ENCODE measurements at regions of chr7 and their contacts with region 1.

Region 1: DNA sequence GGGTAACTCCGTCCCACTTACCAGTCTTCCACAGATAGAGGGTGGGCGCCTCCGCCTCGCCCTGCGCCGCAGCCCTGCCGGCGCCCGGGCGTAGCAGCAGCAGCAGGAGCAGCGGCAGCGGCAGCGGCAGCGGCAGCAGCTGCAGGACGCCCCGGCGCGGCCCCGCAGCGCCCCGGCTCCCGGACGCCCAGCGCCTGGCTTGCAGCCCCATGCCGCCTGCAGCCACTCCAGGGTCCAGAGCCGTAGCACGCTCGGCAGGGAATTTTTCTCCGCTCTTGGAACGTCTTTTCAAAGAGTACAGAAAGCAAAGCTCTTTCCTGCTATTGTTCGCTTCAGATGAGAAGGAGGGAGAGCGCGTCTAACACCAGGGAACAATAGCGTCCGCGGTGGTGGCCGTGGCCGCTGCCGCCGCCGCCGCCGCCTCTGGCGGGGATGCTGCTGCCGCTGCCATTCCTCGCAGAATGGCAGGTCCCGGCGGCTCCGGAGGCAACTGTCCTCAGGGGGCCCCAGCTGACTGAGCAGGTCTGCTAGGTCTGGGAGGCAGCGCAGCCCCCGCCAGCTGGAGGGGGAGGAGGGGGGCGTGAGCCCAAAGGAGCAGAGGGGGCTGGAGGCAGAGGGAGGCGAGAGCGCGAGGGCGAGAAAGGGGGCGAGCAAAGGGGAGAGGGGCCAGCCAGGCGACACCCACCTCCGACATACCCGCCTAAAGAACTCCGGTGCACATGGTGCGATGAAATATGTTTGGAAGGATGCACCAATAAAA is at the start of gene THSD7A:
- DNase-seq: peak; percentile 19 to 74 (median 32)
- ATAC-seq: peak; percentile 73 to 94 (median 86)
- H3K4me3 ChIP-seq: peak within 1 kb of the TSS; percentile 32 to 82 (median 58)
- H3K27ac ChIP-seq: peak within 1 kb of the TSS in 11 of 12 donors; percentile 34 to 77 (median 65)
- H3K4me1 ChIP-seq: peaks cover 0 to 19% (median 7%) of the 10 kb centered on the region in 12 donors
- H3K27me3 ChIP-seq: peaks cover 0 to 13% (median 0%) of the 10 kb centered on the region in 9 donors
- CTCF ChIP-seq: peak in 2 of 12 donors; percentile 18 to 28
- POLR2A ChIP-seq: no peak
- total RNA-seq, gene THSD7A: 0.67 to 5.2 (median 1.6) TPM

Region 2: GRCh38 chr7:11427686-11428273 is 404.1 kb before region 1 on chr7:
- intact Hi-C with region 1: loop called in 5 of 10 experiments (anchors 5 to 10 kb)
- DNase-seq: no peak
- ATAC-seq: no peak
- H3K4me3 ChIP-seq: no peak overlapping the region
- H3K27ac ChIP-seq: no peak overlapping the region
- H3K4me1 ChIP-seq: peaks cover 0 to 10% (median 0%) of the 10 kb centered on the region in 12 donors
- H3K27me3 ChIP-seq: no peaks in the 10 kb centered on the region
- CTCF ChIP-seq: peak; percentile 55 to 89 (median 74)
- POLR2A ChIP-seq: no peak

Region 3: DNA sequence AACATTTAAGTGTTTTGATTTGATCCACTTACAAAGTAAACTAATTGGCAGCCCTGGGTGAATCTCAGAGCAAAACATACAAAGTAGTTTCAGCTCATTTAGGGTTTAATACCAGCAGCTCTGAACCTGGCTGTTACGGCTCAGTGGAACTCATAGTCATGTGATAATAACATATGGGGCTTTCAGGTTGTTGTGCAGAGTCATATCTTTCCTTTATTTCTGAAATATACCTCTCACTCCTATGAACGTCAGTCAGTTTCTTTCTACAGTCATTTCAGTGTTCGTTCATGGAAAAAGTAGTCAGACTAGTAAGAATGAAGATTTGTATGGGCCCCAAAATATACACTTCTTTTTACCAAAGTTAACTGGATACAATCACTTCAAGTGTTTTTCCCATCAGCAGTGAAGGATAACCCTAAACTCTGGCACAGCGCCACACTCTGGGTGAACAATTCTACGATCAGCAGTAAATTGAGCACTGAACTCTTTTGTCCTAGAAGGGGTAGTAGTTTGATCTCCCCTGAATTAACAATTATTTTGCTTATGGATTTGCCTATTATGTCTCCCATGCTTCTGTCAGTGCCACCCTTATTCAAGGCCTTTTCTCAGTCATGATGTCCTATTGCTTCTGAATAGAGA is 218.5 kb before region 1 on chr7:
- intact Hi-C with region 1: loop called in 1 of 10 experiments (anchors 10 kb)
- DNase-seq: no peak
- ATAC-seq: no peak
- H3K4me3 ChIP-seq: no peak overlapping the region
- H3K27ac ChIP-seq: no peak overlapping the region
- H3K4me1 ChIP-seq: no peaks in the 10 kb centered on the region
- H3K27me3 ChIP-seq: no peaks in the 10 kb centered on the region
- CTCF ChIP-seq: no peak
- POLR2A ChIP-seq: no peak

Region 4: DNA sequence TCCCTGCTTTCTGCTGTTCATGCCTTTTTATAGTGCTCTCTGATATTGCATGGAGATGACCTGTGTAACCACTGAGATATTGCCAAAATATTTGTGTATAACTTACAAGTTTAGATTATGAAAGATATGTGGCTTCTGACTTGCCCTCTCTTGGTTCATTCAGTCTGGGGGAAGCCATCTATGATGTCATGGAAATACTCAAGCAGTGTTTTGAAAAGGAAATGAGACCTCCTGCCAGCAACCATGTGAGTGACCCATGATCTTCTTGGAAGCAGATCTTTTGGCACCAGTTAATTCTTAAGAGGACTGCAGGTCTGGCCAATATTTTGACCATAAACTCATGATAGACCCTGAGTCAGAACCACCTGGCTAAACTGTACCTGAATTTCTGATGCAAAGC is 182.9 kb before region 1 on chr7:
- intact Hi-C with region 1: no loop called
- DNase-seq: peak in 1 of 5 donors; percentile 15
- ATAC-seq: peak in 2 of 4 donors; percentile 46 to 78
- H3K4me3 ChIP-seq: no peak overlapping the region
- H3K27ac ChIP-seq: no peak overlapping the region
- H3K4me1 ChIP-seq: peaks cover 0 to 5% (median 0%) of the 10 kb centered on the region in 12 donors
- H3K27me3 ChIP-seq: no peaks in the 10 kb centered on the region
- CTCF ChIP-seq: no peak
- POLR2A ChIP-seq: no peak

Region 5: DNA sequence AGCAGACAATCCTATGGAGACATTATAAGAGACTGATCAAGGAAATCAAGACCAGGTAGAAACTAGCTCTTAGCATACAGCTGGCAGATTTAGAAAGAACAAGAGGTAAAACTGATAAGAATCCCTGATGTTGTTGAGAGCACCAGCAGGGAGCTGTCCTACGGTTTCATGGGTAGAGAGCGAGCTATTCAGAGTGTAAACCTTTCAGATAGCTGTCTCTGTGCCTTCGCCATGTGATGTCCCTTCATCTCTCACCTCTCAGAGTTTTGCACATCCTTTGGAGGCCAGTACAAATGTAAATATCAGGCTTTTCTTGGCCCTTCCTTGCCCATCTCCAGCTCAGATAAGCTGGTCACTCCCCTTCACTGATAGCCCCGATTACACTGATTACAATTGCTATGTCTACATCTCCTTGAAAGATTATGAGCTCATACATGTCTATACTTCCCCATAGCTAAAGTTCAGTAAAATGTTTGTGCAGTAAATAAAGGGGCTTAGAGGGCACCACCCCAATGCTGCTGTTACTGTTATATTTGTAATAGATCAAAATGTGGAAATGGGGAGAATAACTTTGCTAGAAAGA is 21.8 kb before region 1 on chr7:
- intact Hi-C with region 1: no loop called
- DNase-seq: no peak
- ATAC-seq: no peak
- H3K4me3 ChIP-seq: no peak overlapping the region
- H3K27ac ChIP-seq: no peak overlapping the region
- H3K4me1 ChIP-seq: no peaks in the 10 kb centered on the region
- H3K27me3 ChIP-seq: no peaks in the 10 kb centered on the region
- CTCF ChIP-seq: no peak
- POLR2A ChIP-seq: no peak

Region 6: DNA sequence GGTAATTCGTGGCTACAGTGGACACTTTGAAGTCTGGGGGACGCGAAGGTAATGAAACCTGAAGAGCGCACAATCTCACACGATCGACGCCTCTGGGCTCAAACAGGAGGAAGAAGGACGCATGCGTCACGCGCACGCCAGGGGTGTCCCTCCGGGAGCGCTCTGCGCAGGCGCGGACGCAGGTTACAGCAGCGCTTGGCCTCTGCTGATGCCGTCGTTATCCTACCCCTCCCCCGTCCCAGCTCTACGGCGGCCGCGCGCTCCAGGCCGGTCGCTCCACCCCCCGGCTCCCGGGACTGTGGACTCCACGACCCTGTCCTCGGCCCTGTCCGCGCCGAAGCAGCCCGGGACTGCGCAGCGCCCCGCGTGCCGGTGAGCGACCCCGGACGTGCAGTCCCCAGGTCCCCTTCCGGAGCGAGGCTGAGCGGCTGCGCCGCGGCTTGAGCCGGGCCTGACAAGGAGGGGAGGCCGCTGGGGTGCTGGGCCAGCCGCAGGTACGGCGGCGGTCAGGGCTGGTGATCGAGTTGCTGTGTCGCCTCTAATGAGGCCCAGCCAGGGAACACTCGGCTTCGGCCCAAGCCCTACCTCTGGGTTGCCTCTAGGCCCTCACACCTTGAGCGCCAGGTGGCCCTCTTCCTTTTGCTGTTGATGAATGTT is 379.3 kb after region 1 on chr7 and contains the start of gene TMEM106B:
- intact Hi-C with region 1: loop called in 1 of 10 experiments (anchors 10 kb)
- DNase-seq: peak; percentile 95 to 99 (median 98)
- ATAC-seq: peak; percentile 99 to 100 (median 100)
- H3K4me3 ChIP-seq: peak within 1 kb of the TSS; percentile 57 to 91 (median 84)
- H3K27ac ChIP-seq: peak within 1 kb of the TSS; percentile 82 to 97 (median 94)
- H3K4me1 ChIP-seq: peaks cover 0 to 22% (median 12%) of the 10 kb centered on the region in 12 donors
- H3K27me3 ChIP-seq: no peaks in the 10 kb centered on the region
- CTCF ChIP-seq: peak in 2 of 12 donors; percentile 4 to 14
- POLR2A ChIP-seq: peak in 1 of 2 donors; percentile 73
- total RNA-seq, gene TMEM106B: 35.4 to 54.1 (median 49.0) TPM

Region 7: GRCh38 chr7:12322284-12322902 is 490.5 kb after region 1 on chr7:
- intact Hi-C with region 1: loop called in 3 of 10 experiments (anchors 5 kb)
- DNase-seq: no peak
- ATAC-seq: no peak
- H3K4me3 ChIP-seq: no peak overlapping the region
- H3K27ac ChIP-seq: no peak overlapping the region
- H3K4me1 ChIP-seq: no peaks in the 10 kb centered on the region
- H3K27me3 ChIP-seq: peaks cover 0 to under 1% (median 0%) of the 10 kb centered on the region in 9 donors
- CTCF ChIP-seq: peak; percentile 49 to 78 (median 66)
- POLR2A ChIP-seq: no peak

Region 8: DNA sequence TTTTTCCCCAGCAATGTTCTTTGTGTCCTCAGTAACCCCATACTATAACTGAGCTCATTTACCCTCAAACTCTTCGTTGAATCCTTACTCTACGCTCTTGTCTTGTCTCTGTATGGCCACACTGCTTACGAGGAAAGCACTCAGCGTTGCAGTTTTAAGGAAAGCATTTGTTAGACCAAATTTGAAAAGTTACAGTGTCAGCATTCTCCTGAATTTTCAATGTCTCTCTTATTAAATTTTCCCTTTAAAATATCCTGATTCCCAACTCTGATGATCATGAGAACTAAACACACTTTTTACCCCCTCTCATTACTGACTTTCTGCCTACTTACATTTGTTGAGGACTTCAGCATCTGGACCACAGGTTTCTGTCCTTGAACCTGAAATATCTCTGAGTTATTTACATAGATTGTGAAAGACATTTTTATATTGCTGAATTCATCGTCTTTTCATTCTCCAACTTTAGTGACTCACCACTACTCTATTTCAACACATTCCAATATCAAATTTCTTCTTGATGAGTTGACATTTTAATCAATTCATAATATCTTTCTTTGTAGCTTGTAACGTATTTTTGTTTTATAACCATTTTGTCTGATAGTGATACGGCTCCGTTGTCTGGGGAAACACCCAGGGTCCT is 591.6 kb after region 1 on chr7:
- intact Hi-C with region 1: no loop called
- DNase-seq: no peak
- ATAC-seq: no peak
- H3K4me3 ChIP-seq: no peak overlapping the region
- H3K27ac ChIP-seq: no peak overlapping the region
- H3K4me1 ChIP-seq: no peaks in the 10 kb centered on the region
- H3K27me3 ChIP-seq: no peaks in the 10 kb centered on the region
- CTCF ChIP-seq: no peak
- POLR2A ChIP-seq: no peak

Region 9: DNA sequence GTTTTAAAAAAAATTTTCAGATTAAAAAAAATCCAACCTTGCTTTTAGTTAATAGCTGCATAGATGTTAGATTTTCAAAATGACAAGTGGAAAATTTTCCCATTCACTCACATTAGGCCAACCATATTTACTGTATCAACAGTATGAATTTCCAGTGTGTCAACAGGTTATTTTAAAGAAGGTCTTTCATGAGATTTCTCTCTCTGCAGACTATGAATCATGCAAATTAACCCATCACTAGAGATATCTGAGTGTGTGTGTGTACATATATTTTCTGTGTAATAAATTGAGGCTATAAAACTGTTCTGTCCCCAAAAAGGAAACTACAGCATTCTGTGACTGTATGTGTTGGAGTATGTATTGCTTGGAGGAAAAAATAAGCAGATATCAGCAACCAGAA is 1161.1 kb after region 1 on chr7:
- intact Hi-C with region 1: no loop called
- DNase-seq: no peak
- ATAC-seq: no peak
- H3K4me3 ChIP-seq: no peak overlapping the region
- H3K27ac ChIP-seq: no peak overlapping the region
- H3K4me1 ChIP-seq: no peaks in the 10 kb centered on the region
- H3K27me3 ChIP-seq: no peaks in the 10 kb centered on the region
- CTCF ChIP-seq: no peak
- POLR2A ChIP-seq: no peak